Activated CD8-positive, alpha-beta T cell treated with anti-CD3 and anti-CD28 coated beads for 36 hours (primary cell): ENCODE measurements at regions of chr10 and their contacts with region 1.

Region 1: DNA sequence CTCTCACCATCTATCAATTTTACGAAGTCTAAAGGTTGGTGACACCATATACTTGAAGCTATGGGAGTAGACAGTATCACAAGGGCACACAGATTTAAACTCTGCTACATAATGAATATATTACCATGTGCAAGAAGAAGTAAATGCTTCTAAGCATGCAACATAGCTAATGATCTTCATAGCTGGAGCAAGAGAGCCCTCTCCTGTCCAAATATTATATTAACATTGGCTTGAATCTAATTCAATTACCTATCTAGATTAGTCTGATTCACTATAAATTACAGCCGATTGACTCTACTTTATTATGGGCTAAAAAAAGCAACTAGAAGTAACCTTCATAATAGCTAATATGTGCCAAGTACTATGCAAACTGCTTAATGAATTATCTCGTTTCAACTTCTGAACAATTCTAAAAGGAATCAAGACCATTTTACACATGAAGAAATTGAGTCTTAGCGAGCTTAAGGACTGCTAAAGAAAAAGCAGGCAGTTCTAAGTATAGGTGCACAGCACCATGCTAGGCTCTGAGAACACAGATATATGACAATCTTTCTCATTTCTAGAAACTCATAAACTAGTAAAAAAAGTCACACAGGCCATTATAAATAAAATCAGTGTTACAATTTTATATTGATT is 21.9 kb downstream of the FRA10AC1 start:
- DNase-seq: no peak
- ATAC-seq: peak; percentile 45
- H3K4me3 Mint-ChIP-seq: no peak overlapping the region
- H3K27ac Mint-ChIP-seq: no peak overlapping the region
- H3K4me1 Mint-ChIP-seq: no peaks in the 10 kb centered on the region
- H3K27me3 Mint-ChIP-seq: peaks cover 3% of the 10 kb centered on the region
- CTCF ChIP-seq: peak; percentile 42

Region 2: DNA sequence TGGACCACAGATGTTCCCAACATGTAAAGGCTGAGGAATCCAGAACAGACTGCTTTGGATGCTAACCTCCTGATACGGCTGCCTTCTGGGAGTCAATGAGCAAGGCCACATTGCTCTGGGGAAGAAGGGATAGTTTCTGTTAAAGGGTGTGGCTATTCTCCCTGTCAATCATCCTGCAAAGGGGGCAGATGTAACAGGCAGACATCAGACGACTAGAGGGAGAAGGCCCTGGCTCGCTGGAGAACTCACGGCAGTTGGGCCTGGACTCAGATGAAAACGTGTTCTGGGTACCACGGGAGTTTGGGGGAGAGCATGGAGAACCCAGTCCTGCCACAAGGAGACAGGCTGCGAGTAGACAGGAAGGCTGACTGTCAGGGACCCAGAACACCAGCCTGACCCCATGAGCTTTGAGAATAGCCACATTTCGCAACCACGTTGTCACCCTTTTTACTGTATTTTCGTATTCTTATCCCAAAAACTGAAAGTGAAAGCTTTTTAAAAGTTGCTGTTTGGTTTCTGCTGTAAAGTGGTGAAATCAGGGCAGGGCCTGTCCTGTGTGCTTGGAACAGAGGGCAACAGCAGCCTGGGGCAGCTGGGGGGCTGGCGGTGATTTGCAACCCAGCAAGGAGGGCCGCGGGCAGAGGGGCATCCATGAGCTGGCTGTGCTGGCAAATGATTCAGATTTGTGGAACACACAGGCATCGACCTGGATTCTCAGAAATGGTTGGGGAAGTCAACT is 293.7 kb before region 1 on chr10:
- CTCF ChIA-PET with region 1: no interaction called
- POLR2A ChIA-PET with region 1: no interaction called
- intact Hi-C with region 1: loop called (anchors 10 kb)
- DNase-seq: peak; percentile 26
- ATAC-seq: peak; percentile 66
- H3K4me3 Mint-ChIP-seq: no peak overlapping the region
- H3K27ac Mint-ChIP-seq: peak overlapping the region; percentile 65
- H3K4me1 Mint-ChIP-seq: peaks cover 16% of the 10 kb centered on the region
- H3K27me3 Mint-ChIP-seq: no peaks in the 10 kb centered on the region
- CTCF ChIP-seq: no peak

Region 3: GRCh38 chr10:93554760-93555432 is 125.6 kb before region 1 on chr10:
- CTCF ChIA-PET with region 1: interaction called, 22 read pairs
- POLR2A ChIA-PET with region 1: no interaction called
- intact Hi-C with region 1: loop called (anchors 10 kb)
- DNase-seq: peak; percentile 70
- ATAC-seq: peak; percentile 47
- H3K4me3 Mint-ChIP-seq: no peak overlapping the region
- H3K27ac Mint-ChIP-seq: no peak overlapping the region
- H3K4me1 Mint-ChIP-seq: no peaks in the 10 kb centered on the region
- H3K27me3 Mint-ChIP-seq: peaks cover 3% of the 10 kb centered on the region
- CTCF ChIP-seq: peak; percentile 69

Region 4: DNA sequence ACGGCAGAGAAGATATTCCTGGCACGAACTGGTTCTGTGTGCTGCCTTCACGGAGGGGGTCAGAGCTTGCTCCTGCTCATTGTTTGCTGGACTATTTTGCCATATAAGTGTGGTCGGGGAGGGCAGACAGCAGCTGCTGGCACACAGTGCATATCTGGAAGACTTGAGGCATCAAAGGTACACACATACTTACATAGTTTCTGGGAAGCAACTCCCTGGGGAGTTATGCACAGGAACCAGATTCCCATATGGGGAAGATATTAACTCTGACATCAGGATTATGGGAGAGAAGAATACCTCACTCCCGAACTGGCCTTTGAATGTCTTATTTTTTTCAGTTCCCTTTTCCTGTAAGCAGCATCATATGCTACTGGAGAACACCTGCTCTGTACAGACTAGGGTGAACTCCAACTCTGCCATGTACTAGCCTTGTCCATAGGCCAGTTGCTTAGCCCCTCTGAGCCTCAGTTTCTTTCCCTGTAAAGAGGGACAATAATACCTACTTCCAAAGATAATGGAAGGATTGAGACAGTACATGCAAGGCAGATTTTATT is 118.7 kb after region 1 on chr10:
- CTCF ChIA-PET with region 1: no interaction called
- POLR2A ChIA-PET with region 1: no interaction called
- intact Hi-C with region 1: no loop called
- DNase-seq: no peak
- ATAC-seq: no peak
- H3K4me3 Mint-ChIP-seq: no peak overlapping the region
- H3K27ac Mint-ChIP-seq: no peak overlapping the region
- H3K4me1 Mint-ChIP-seq: no peaks in the 10 kb centered on the region
- H3K27me3 Mint-ChIP-seq: peaks cover 11% of the 10 kb centered on the region
- CTCF ChIP-seq: no peak